ENCODE measurements at regions of chr7 and their contacts with region 1.

Region 1: DNA sequence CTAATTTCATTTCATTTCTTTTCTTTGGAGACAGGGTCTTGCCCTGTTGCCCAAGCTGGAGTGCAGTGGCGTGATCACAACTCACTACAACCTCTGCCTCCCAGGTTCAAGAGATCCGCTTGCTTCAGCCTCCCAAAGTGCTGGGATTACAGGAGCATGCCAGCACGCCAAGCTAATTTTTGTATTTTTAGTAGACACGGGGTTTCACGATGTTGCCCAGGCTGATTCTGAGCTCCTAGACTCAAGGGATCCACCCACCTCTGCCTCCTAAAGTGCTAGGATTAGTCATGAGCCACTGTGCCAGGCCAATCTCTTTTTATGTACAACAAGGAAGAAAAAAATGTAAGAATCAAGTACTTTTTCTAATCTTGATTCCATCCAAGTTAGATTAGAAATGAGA is 10.7 kb upstream of the KMT2E start:
- DNase-seq: peak in 1 of 2 experiments; percentile 34
- H3K4me3 ChIP-seq: no peak overlapping the region
- H3K27ac ChIP-seq: no peak overlapping the region
- H3K4me1 ChIP-seq: peaks cover 32% of the 10 kb centered on the region
- H3K27me3 ChIP-seq: no peaks in the 10 kb centered on the region
- CTCF ChIP-seq: no peak

Region 2: GRCh38 chr7:105228555-105228954 is 225.3 kb after region 1 on chr7:
- CTCF ChIA-PET with region 1: no interaction called
- POLR2A ChIA-PET with region 1: interaction called, 17 read pairs
- intact Hi-C with region 1: no loop called
- DNase-seq: no peak
- H3K4me3 ChIP-seq: no peak overlapping the region
- H3K27ac ChIP-seq: no peak overlapping the region
- H3K4me1 ChIP-seq: peaks cover 12% of the 10 kb centered on the region; the same call in 1 of the 2 replicates
- H3K27me3 ChIP-seq: no peaks in the 10 kb centered on the region
- CTCF ChIP-seq: no peak

Measured in PC-9 (cell line).